GM12878 (cell line): ENCODE measurements at regions of chr5 and their contacts with region 1.

Region 1: DNA sequence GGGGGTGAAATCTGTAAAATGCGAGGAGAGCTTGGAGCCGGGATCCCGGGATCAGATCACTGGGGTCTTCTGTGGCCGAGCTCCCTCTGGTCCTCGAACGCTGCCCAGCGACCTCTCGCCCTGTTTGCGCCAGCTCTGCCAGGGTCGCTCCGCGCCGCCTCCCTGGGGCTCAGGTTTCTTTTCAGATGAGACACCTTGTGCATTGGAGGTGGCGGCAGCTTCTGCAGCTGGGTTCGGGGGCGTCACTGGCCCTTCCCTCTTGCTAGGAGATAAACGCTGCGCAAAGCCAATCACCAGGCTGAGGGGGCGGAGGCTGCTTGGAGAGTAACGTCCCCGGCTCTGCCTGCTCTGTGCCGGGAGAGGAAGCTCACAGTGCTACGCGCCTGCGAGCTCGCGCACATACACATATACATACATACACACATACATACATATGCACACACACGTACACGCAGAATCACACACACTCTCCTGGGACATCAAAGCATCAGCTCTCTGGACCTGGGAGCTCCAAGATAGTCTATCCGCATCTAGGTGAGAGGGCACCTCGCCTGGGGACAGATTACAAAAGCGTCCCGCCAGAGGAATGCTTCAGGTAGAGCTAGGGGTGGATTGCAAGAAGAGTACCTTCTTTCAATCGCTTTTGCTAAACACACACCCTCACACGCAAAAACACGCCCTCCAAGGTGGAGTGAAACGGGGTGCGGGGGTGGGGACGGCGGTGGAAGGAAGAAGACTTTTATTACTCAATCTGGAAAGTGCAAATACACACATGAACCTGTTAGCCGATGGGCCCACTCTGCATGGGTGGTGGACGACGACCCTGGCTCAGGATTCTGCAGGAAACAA is at the start of gene ST8SIA4:
- DNase-seq: peak; percentile 95
- ATAC-seq: peak; percentile 67
- H3K4me3 ChIP-seq: peak within 1 kb of the TSS; percentile 98
- H3K27ac ChIP-seq: peak within 1 kb of the TSS; percentile 98
- H3K4me1 ChIP-seq: no peaks in the 10 kb centered on the region
- H3K27me3 ChIP-seq: no peaks in the 10 kb centered on the region
- CTCF ChIP-seq: no peak
- EP300 ChIP-seq: peak in 1 of 2 experiments; percentile 24; a peak in 1 of 4 replicates
- POLR2A ChIP-seq: peak; percentile 93
- RAD21 ChIP-seq: peak; percentile 18; the same call in 1 of the 2 replicates
- polyA plus RNA-seq, gene ST8SIA4: 4.4 to 7.3 TPM

Region 2: DNA sequence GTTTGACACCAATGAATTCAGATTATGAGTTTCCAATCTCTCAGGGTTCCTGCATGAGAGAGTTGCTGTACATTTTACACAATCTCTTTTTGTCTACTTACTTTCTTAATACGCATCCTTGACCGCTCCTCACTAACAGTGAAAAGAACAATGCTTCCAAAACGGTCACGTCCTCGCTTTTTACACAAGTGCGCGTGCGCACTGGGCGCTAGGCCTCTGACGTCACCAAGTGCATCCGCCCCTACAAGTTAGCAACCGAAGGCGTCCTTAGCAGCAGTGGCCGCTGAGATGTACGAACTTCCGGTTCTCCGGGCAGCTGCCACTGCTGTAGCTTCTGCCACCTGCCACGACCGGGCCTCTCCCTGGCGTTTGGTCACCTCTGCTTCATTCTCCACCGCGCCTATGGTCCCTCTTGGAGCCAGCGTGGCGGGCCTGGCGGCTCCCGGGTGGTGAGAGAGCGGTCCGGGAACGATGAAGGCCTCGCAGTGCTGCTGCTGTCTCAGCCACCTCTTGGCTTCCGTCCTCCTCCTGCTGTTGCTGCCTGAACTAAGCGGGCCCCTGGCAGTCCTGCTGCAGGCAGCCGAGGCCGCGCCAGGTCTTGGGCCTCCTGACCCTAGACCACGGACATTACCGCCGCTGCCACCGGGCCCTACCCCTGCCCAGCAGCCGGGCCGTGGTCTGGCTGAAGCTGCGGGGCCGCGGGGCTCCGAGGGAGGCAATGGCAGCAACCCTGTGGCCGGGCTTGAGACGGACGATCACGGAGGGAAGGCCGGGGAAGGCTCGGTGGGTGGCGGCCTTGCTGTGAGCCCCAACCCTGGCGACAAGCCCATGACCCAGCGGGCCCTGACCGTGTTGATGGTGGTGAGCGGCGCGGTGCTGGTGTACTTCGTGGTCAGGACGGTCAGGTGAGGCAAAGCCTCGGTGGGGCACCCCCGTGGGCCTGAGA is 367.9 kb before region 1 on chr5 and contains the start of gene FAM174A:
- CTCF ChIA-PET with region 1: no interaction called
- POLR2A ChIA-PET with region 1: no interaction called
- RAD21 ChIA-PET with region 1: no interaction called
- SMC1A ChIA-PET with region 1: interaction called, 3 read pairs
- in situ Hi-C with region 1: no loop called
- intact Hi-C with region 1: loop called (anchors 5 kb)
- DNase-seq: peak; percentile 94
- ATAC-seq: peak; percentile 93
- H3K4me3 ChIP-seq: peak within 1 kb of the TSS; percentile 85
- H3K27ac ChIP-seq: peak within 1 kb of the TSS; percentile 76
- H3K4me1 ChIP-seq: no peaks in the 10 kb centered on the region
- H3K27me3 ChIP-seq: no peaks in the 10 kb centered on the region
- CTCF ChIP-seq: no peak
- EP300 ChIP-seq: no peak
- POLR2A ChIP-seq: peak; percentile 72
- RAD21 ChIP-seq: no peak
- polyA plus RNA-seq, gene FAM174A: 1.4 to 4.2 TPM

Region 3: DNA sequence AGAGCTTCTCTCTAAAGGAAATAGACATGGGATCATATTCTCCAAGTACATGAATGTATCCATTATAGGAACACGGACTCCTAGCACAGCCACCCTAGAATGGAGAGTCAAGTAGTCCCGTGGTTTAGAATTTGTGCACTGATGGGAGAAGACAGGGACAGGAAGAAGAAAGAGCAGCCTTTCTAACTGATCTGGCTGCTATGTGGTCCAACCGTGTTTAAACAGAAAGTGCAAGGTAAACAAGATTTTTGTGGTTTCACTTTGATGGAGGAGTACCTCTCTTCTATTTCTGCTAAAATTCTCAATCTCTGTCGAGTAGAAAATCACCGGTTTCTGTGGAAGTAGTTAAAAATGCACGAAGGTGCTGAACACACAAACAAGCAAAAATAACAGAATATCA is 171.5 kb before region 1 on chr5:
- CTCF ChIA-PET with region 1: no interaction called
- POLR2A ChIA-PET with region 1: interaction called, 3 read pairs
- RAD21 ChIA-PET with region 1: interaction called, 3 read pairs
- SMC1A ChIA-PET with region 1: interaction called, 7 read pairs
- in situ Hi-C with region 1: no loop called
- intact Hi-C with region 1: loop called (anchors 5 kb)
- DNase-seq: peak; percentile 52
- ATAC-seq: peak; percentile 95
- H3K4me3 ChIP-seq: peak overlapping the region; percentile 49
- H3K27ac ChIP-seq: peak overlapping the region; percentile 41; the same call in 1 of the 2 replicates
- H3K4me1 ChIP-seq: peaks cover 3% of the 10 kb centered on the region; the same call in 1 of the 2 replicates
- H3K27me3 ChIP-seq: no peaks in the 10 kb centered on the region
- CTCF ChIP-seq: no peak
- EP300 ChIP-seq: no peak
- POLR2A ChIP-seq: no peak
- RAD21 ChIP-seq: no peak

Region 4: GRCh38 chr5:100818340-100818739 is 84.9 kb before region 1 on chr5:
- CTCF ChIA-PET with region 1: interaction called, 12 read pairs
- POLR2A ChIA-PET with region 1: no interaction called
- RAD21 ChIA-PET with region 1: interaction called, 25 read pairs
- SMC1A ChIA-PET with region 1: interaction called, 13 read pairs
- in situ Hi-C with region 1: no loop called
- intact Hi-C with region 1: no loop called
- DNase-seq: no peak
- ATAC-seq: peak; percentile 67
- H3K4me3 ChIP-seq: no peak overlapping the region
- H3K27ac ChIP-seq: no peak overlapping the region; the same call in 1 of the 2 replicates
- H3K4me1 ChIP-seq: peaks cover 4% of the 10 kb centered on the region; the same call in 1 of the 2 replicates
- H3K27me3 ChIP-seq: no peaks in the 10 kb centered on the region
- CTCF ChIP-seq: no peak
- EP300 ChIP-seq: no peak
- POLR2A ChIP-seq: no peak
- RAD21 ChIP-seq: no peak

Region 5: GRCh38 chr5:100852988-100853449 is 50.2 kb before region 1 on chr5:
- CTCF ChIA-PET with region 1: interaction called, 18 read pairs
- POLR2A ChIA-PET with region 1: interaction called, 61 read pairs
- RAD21 ChIA-PET with region 1: interaction called, 122 read pairs
- SMC1A ChIA-PET with region 1: interaction called, 220 read pairs
- in situ Hi-C with region 1: no loop called
- intact Hi-C with region 1: loop called (anchors 1 kb)
- DNase-seq: peak; percentile 89
- ATAC-seq: peak; percentile 89
- H3K4me3 ChIP-seq: peak overlapping the region; percentile 21; the same call in 1 of the 2 replicates
- H3K27ac ChIP-seq: peak overlapping the region; percentile 94
- H3K4me1 ChIP-seq: peaks cover 38% of the 10 kb centered on the region
- H3K27me3 ChIP-seq: no peaks in the 10 kb centered on the region
- CTCF ChIP-seq: no peak
- EP300 ChIP-seq: peak; percentile 95 to 96
- POLR2A ChIP-seq: no peak
- RAD21 ChIP-seq: peak; percentile 20; the same call in 1 of the 2 replicates

Region 6: GRCh38 chr5:101009758-101010519 is 106.7 kb after region 1 on chr5:
- CTCF ChIA-PET with region 1: interaction called, 4 read pairs
- POLR2A ChIA-PET with region 1: interaction called, 12 read pairs
- RAD21 ChIA-PET with region 1: interaction called, 46 read pairs
- SMC1A ChIA-PET with region 1: interaction called, 38 read pairs
- in situ Hi-C with region 1: no loop called
- intact Hi-C with region 1: no loop called
- DNase-seq: peak; percentile 39
- ATAC-seq: peak; percentile 94
- H3K4me3 ChIP-seq: no peak overlapping the region
- H3K27ac ChIP-seq: peak overlapping the region; percentile 50; the same call in 1 of the 2 replicates
- H3K4me1 ChIP-seq: peaks cover 8% of the 10 kb centered on the region
- H3K27me3 ChIP-seq: no peaks in the 10 kb centered on the region
- CTCF ChIP-seq: no peak
- EP300 ChIP-seq: 0 out of 4 replicates have a peak, but pooled peaks of 1 of the 2 experiments have one; percentile 27
- POLR2A ChIP-seq: no peak
- RAD21 ChIP-seq: no peak